HepG2 (cell line): ENCODE measurements at regions of chr7 and their contacts with region 1.

Region 1: GRCh38 chr7:143391462-143392404 is 10.6 kb downstream of the ZYX start:
- DNase-seq: no peak
- ATAC-seq: peak; percentile 1; the same call in 1 of the 3 replicates
- H3K4me3 ChIP-seq: no peak overlapping the region
- H3K27ac ChIP-seq: peak overlapping the region; percentile 82
- H3K4me1 ChIP-seq: peaks cover 69% of the 10 kb centered on the region
- H3K27me3 ChIP-seq: no peaks in the 10 kb centered on the region
- CTCF ChIP-seq: no peak
- EP300 ChIP-seq: 0 out of 4 replicates have a peak, but pooled peaks of 1 of the 2 experiments have one; percentile 14
- POLR2A ChIP-seq: no peak; a peak in 1 of 4 replicates
- RAD21 ChIP-seq: no peak

Region 2: DNA sequence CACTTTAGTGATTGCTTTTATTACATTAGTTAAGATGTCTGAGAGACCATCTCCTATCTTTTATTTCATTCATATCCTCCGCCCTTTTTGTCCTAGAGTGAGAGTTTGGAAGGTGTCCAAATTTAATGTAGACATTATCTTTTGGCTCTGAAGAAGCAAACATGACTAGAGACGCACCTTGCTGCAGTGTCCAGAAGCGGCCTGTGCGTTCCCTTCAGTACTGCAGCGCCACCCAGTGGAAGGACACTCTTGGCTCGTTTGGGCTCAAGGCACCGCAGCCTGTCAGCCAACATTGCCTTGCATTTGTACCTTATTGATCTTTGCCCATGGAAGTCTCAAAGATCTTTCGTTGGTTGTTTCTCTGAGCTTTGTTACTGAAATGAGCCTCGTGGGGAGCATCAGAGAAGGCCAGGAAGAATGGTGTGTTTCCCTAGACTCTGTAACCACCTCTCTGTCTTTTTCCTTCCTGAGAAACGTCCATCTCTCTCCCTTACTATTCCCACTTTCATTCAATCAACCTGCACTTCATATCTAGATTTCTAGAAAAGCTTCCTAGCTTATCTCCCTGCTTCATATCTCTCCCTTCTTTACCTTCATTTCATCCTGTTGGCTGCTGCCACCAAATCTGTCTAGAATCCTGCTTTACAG is 86.2 kb before region 1 on chr7:
- CTCF ChIA-PET with region 1: no interaction called
- POLR2A ChIA-PET with region 1: no interaction called
- in situ Hi-C with region 1: no loop called
- intact Hi-C with region 1: no loop called
- DNase-seq: peak; percentile 44
- ATAC-seq: peak; percentile 97
- H3K4me3 ChIP-seq: no peak overlapping the region
- H3K27ac ChIP-seq: no peak overlapping the region
- H3K4me1 ChIP-seq: no peaks in the 10 kb centered on the region
- H3K27me3 ChIP-seq: no peaks in the 10 kb centered on the region
- CTCF ChIP-seq: peak; percentile 87
- EP300 ChIP-seq: no peak
- POLR2A ChIP-seq: no peak
- RAD21 ChIP-seq: peak; percentile 73

Region 3: DNA sequence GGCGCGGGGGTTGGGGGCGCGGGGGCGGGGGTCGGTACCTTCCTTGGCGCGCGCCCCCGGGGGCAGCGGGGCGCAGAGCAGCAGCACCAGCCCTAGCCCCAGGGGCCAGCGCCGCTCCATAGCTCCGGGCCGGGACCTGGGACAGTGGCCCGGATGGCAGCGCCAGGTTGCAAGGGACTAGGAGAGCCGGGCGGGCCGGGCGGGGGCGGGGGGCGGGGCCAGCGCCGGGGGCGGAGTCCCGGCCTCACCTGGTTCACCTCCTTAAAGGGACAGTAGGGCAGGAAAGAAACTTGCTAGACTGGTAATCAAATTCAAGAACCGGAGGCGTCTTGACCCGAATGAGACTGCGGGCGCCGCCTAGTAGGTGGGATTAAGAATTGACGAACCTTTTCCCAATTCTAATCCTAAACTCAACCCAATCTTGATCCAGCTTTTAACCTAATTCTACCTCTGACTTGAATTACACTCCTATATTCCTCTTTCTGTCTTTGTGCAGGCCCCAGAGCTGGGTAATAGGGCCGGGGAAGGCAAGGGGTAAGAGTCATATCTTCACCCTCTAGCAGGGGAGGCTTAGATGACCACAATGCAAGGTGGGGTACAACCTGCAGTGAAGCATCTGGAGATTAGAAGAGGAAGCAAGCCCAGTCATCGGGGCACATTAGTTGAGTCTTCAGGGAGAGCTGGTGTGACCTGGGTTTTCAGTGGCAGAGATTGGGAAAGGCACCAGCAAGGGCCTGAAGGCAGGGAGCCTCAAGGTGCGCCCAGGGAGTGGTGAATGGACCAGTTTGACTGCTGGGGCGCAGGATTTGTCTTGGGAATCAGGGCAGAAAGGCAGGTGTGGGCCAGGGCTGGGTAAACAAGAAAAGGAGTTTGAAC is 17.2 kb after region 1 on chr7 and contains the start of gene EPHA1:
- CTCF ChIA-PET with region 1: no interaction called
- POLR2A ChIA-PET with region 1: interaction called, 24 read pairs
- in situ Hi-C with region 1: no loop called
- intact Hi-C with region 1: loop called (anchors 1 kb)
- DNase-seq: no peak
- ATAC-seq: peak; percentile 89
- H3K4me3 ChIP-seq: peak within 1 kb of the TSS; percentile 51 to 80 (median 71)
- H3K27ac ChIP-seq: no peak within 1 kb of the TSS
- H3K4me1 ChIP-seq: peaks cover 38% of the 10 kb centered on the region
- H3K27me3 ChIP-seq: peaks cover 0 to 6% of the 10 kb centered on the region in 2 experiments; a peak in 2 of 5 replicates
- CTCF ChIP-seq: 0 out of 2 replicates have a peak, but pooled peaks have one; percentile 3
- EP300 ChIP-seq: no peak
- POLR2A ChIP-seq: no peak
- RAD21 ChIP-seq: no peak
- total RNA-seq, gene EPHA1: 7.7 and 17.1 TPM in 2 replicates